ENCODE measurements at regions of chr7 and their contacts with region 1.

Region 1: GRCh38 chr7:150322833-150323681 is at the starts of genes ACTR3C and LRRC61:
- DNase-seq: peak; percentile 64
- ATAC-seq: peak; percentile 67
- H3K4me3 Mint-ChIP-seq: peak within 1 kb of the TSS; percentile 93
- H3K27ac Mint-ChIP-seq: peak within 1 kb of the TSS; percentile 92
- H3K4me1 Mint-ChIP-seq: peaks cover 54% of the 10 kb centered on the region
- H3K27me3 Mint-ChIP-seq: no peaks in the 10 kb centered on the region
- CTCF ChIP-seq: no peak
- total RNA-seq, gene ACTR3C: 10.1 and 14.3 TPM in 2 replicates
- total RNA-seq, gene LRRC61: 10.7 and 11.0 TPM in 2 replicates

Region 2: DNA sequence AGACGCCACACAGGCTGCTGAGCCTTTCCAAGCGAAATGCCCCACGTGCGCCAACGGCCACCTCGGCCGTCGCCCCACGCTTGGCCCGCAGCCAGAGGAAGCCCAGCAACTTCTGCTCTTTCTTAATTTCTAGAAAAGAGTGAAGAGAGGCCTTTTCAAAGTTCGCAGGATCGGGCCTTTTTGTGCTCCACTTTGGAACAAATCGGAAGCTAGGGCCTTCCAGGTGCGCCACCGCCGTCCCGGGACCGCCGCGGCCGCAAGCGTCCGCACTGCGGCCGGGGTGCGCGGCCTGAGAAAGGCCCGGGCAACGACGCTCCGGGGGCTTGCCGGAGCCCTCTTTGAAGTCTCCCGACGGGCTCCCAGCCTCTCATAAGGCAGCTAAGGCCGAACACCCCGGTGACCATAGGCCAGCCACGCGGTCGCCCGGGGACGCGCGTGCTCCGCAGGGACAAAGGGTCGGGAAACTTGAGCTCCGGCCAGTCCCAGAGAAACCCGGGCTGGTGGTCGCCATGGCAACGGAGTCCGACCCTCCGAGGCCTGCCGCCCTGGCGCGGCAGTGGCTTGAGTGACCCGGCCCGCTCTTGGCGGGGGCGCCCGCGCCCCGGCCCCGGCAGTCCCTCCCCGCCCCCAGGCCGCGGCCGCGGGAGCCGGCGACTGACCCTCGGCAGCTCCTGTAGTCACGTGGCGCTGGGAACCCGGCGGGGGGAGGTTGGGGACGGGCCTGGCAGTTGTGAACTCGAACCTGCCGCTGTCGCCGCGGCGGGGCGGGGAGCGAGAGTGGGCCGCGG is 45.2 kb after region 1 on chr7 and contains the start of gene REPIN1:
- CTCF ChIA-PET with region 1: no interaction called
- POLR2A ChIA-PET with region 1: interaction called, 5 read pairs
- intact Hi-C with region 1: loop called (anchors 1 kb)
- DNase-seq: peak; percentile 85
- ATAC-seq: peak; percentile 43
- H3K4me3 Mint-ChIP-seq: peak within 1 kb of the TSS; percentile 95
- H3K27ac Mint-ChIP-seq: peak within 1 kb of the TSS; percentile 95
- H3K4me1 Mint-ChIP-seq: peaks cover 72% of the 10 kb centered on the region
- H3K27me3 Mint-ChIP-seq: no peaks in the 10 kb centered on the region
- CTCF ChIP-seq: no peak
- total RNA-seq, gene REPIN1: 106 and 116 TPM in 2 replicates

Region 3: DNA sequence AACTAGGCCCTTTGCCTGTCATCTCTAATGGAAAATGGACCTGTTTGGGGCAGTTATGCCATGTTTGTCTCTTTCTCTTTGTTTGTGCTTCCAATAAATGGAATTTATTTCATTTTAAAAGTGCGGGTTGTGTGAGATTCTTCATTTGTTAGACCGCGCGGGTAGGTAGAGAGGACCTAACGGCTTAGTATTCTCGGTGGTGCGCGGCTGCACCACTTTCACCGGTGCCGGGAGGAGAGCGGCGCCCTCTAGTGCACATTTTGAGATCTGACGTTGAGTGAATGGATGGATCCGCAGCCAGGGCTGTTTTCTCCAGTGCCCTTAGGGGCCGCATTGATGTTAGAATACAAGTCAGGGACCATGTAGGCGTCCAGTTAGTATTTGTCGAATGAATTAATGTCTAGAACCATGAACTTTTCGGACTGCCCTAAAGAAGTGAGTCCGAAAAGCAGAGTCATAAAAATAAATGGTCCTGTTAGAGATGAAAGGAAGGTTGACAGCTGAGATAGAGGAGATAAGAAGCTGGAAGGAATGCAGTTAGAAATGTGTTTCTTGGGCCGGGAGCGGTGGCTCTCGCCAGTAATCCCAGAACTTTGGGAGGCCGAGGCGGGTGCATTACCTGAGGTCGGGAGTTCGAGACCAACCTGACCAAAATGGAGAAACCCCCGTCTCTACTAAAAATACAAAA is 98.1 kb after region 1 on chr7:
- CTCF ChIA-PET with region 1: interaction called, 3 read pairs
- POLR2A ChIA-PET with region 1: no interaction called
- intact Hi-C with region 1: loop called (anchors 1 kb)
- DNase-seq: peak; percentile 69
- ATAC-seq: peak; percentile 98
- H3K4me3 Mint-ChIP-seq: peak overlapping the region; percentile 47
- H3K27ac Mint-ChIP-seq: peak overlapping the region; percentile 19
- H3K4me1 Mint-ChIP-seq: peaks cover 7% of the 10 kb centered on the region
- H3K27me3 Mint-ChIP-seq: peaks cover 7% of the 10 kb centered on the region
- CTCF ChIP-seq: peak; percentile 94

Region 4: DNA sequence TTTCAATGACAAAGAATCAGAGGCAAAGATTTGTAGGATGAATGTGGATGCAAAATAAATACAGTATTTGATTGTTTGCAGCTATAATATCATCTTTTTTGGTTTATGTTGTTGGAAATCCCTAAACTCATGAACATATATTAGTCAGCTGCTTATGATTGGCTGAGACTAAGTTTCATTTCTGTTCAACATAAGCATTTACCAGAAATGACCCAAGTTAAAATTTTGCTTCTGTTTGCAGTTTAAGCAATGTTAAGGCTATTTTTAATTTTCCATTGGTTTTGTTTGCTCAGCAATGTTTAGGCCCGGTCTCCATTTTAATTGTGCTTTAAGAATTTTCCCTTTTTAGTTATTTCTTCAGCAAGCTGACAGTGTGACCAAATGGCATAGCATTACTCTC is 287.2 kb after region 1 on chr7:
- CTCF ChIA-PET with region 1: no interaction called
- POLR2A ChIA-PET with region 1: no interaction called
- intact Hi-C with region 1: no loop called
- DNase-seq: no peak
- ATAC-seq: no peak
- H3K4me3 Mint-ChIP-seq: no peak overlapping the region
- H3K27ac Mint-ChIP-seq: no peak overlapping the region
- H3K4me1 Mint-ChIP-seq: no peaks in the 10 kb centered on the region
- H3K27me3 Mint-ChIP-seq: peaks cover 2% of the 10 kb centered on the region
- CTCF ChIP-seq: no peak